ENCODE measurements at regions of chr1 and their contacts with region 1.

Region 1: DNA sequence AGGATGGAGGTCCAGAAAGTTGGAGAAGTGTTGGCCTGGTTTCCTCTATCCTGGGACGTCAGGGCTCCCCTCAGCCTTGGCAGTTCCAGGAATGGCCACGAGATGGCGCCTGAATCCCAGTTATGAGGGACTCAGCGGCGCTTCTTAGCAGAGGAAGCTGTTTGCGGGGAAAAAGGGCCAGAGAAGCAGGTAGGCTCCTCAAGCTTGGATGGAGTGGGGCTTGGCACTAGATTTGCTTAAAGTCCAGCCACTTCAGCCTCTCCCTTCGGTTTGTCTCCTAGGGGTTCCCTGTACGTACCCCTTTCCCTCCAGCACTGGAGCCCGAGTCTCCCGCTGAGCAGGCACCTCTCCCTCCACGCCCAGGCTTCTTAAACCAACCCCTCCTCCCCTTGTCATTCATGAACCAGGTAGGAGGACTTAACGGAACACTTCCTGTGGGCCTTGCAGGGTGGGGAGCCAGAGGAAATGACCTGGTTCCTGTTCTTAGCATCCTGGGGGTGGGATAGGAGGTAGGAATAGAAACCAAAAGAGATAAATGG is 32.0 kb upstream of the TENT5B start:
- DNase-seq: peak; percentile 85
- H3K4me3 Mint-ChIP-seq: no peak overlapping the region
- H3K27ac Mint-ChIP-seq: no peak overlapping the region
- H3K4me1 Mint-ChIP-seq: peaks cover 9% of the 10 kb centered on the region
- H3K27me3 Mint-ChIP-seq: no peaks in the 10 kb centered on the region
- CTCF ChIP-seq: peak; percentile 98

Region 2: DNA sequence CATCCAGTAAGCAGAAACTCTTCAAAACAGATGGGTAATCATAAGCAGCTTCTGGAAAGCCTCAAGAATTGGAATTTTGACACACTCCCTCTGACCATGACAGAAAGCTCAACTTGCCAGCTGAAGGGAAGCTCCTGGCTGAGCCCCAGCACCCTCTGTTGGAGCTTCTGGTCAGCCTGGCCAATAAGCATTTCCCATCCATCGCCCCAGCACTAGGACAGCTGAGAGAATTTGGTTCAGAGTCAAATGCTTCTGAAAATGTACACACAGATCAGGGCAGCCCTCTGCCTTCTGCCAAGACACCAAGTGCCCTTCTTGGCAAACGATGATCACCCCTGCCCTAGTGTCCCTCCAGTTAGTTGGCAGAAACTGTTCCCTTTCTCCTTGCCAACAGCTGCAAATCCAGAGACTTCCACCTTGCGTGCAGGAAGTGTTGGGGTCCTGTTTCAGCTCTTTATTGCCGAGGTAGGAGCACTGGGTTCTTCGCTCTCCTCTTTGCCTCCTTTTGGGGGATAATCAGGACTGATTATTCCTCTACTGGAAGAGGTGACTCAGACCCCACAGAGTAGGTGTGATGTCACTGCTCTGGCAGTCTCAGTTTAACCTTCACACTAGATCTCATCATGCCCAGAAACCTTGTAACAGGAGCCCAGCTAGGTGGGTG is 245.1 kb before region 1 on chr1:
- CTCF ChIA-PET with region 1: no interaction called
- POLR2A ChIA-PET with region 1: no interaction called
- intact Hi-C with region 1: no loop called
- DNase-seq: peak; percentile 70
- H3K4me3 Mint-ChIP-seq: no peak overlapping the region
- H3K27ac Mint-ChIP-seq: no peak overlapping the region
- H3K4me1 Mint-ChIP-seq: peaks cover 11% of the 10 kb centered on the region
- H3K27me3 Mint-ChIP-seq: no peaks in the 10 kb centered on the region
- CTCF ChIP-seq: no peak

Region 3: GRCh38 chr1:26965213-26965612 is 79.5 kb before region 1 on chr1:
- CTCF ChIA-PET with region 1: interaction called, 30 read pairs
- POLR2A ChIA-PET with region 1: no interaction called
- intact Hi-C with region 1: loop called (anchors 1 kb)
- DNase-seq: no peak
- H3K4me3 Mint-ChIP-seq: no peak overlapping the region
- H3K27ac Mint-ChIP-seq: no peak overlapping the region
- H3K4me1 Mint-ChIP-seq: peaks cover 37% of the 10 kb centered on the region
- H3K27me3 Mint-ChIP-seq: no peaks in the 10 kb centered on the region
- CTCF ChIP-seq: no peak

Region 4: DNA sequence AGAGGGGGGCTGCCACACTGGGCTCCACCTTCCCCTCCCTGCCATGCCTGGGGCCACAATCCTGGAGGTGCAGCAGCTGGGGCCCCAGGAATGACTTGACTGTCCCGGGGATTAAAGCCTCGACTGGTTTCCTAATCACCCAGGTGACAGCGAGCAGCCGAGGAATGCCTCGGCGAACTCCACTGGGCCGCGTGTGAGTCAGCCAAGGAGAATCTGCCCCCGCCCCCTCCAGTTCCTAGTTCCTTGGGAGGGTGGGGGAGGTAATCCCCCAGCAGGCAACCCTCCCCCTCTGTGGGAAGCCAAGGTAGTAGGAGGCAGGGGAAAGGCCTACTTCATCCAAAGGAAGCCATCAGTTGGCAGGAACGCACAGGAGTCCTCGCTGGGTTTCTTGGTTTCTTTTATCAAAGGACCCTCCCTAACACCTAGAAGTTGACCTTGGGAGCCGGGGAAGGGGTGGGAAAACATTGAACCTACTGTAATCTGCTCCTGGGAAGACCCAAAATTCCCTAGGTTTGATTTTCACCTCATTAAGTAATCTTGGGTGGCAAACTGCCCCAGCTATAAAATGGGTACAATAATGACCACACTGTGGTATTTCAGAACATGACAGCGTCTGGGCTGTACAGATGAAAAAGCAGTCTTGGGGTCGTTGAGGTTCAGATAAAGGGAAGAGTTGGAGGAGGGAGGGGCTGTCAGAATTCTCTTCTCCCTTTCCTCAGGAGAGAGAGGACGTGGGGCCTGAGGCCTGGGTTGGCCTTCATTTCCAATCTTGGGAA is 33.5 kb before region 1 on chr1:
- CTCF ChIA-PET with region 1: interaction called, 11 read pairs
- POLR2A ChIA-PET with region 1: interaction called, 4 read pairs
- intact Hi-C with region 1: no loop called
- DNase-seq: peak; percentile 95
- H3K4me3 Mint-ChIP-seq: peak overlapping the region; percentile 78
- H3K27ac Mint-ChIP-seq: peak overlapping the region; percentile 78
- H3K4me1 Mint-ChIP-seq: peaks cover 14% of the 10 kb centered on the region
- H3K27me3 Mint-ChIP-seq: no peaks in the 10 kb centered on the region
- CTCF ChIP-seq: no peak

Region 5: GRCh38 chr1:27057801-27058625 is 13.3 kb after region 1 on chr1:
- CTCF ChIA-PET with region 1: interaction called, 23 read pairs
- POLR2A ChIA-PET with region 1: interaction called, 3 read pairs
- intact Hi-C with region 1: no loop called
- DNase-seq: no peak
- H3K4me3 Mint-ChIP-seq: no peak overlapping the region
- H3K27ac Mint-ChIP-seq: no peak overlapping the region
- H3K4me1 Mint-ChIP-seq: no peaks in the 10 kb centered on the region
- H3K27me3 Mint-ChIP-seq: no peaks in the 10 kb centered on the region
- CTCF ChIP-seq: no peak

Region 6: DNA sequence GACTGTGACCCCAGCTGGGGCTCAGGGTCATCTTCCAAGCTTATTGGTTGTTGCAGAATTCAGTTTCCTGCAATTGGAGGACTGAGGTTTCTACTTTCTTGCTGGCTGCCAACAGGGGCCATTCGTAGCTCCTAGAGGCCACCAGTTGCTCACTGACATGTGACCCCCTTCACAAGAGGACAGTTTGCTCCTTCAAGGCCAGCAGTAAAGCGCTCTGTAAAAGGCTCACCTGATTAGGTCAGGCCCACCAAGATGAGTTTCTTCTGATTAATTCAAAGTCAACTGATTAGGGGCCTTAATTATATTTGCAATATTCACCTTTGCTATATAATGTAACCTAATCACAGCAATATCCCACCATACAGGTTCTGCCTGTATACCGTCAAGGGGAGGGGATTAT is 41.3 kb after region 1 on chr1:
- CTCF ChIA-PET with region 1: interaction called, 345 read pairs
- POLR2A ChIA-PET with region 1: interaction called, 3 read pairs
- intact Hi-C with region 1: no loop called
- DNase-seq: no peak
- H3K4me3 Mint-ChIP-seq: no peak overlapping the region
- H3K27ac Mint-ChIP-seq: no peak overlapping the region
- H3K4me1 Mint-ChIP-seq: no peaks in the 10 kb centered on the region
- H3K27me3 Mint-ChIP-seq: peaks cover 16% of the 10 kb centered on the region
- CTCF ChIP-seq: no peak

Region 7: DNA sequence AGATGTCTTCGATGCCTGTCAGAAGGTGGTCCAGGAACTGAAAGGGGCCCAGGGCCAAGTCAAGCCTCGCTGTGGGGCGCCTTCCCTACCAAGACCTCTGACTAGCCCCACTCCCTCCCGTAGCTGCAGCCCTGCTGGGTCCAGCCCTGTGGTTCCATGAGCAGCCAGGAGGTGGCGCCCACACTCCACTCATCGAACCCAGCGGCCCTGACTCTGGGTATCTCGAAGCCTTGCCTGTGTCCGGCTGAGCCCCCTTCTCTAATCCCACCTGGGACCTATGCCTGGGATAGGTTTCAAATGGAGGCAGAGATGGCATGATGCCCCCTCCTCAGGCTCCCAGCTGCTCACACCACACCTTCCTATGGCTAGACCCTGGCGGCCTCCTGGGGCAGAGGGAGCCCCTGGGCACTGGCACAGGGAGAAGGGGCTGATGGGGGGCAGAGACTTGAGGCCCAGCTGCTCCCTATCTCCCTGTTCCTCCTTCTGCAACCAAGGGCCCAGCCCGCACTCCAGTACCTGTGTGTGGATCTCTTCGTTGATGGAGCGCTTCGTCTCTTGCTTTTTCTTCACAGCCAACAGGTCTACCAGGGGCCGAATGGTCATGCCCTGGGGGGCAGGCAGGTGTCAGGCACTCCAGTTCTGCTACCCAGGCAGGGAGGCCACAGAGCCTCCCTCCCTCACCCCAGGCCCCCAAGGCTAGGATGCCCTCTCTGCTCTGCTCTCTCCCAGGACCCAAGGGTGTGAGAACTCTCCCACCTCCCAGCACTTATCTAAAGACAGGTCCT is 58.2 kb after region 1 on chr1:
- CTCF ChIA-PET with region 1: interaction called, 345 read pairs
- POLR2A ChIA-PET with region 1: interaction called, 26 read pairs
- intact Hi-C with region 1: no loop called
- DNase-seq: peak; percentile 72
- H3K4me3 Mint-ChIP-seq: no peak overlapping the region
- H3K27ac Mint-ChIP-seq: no peak overlapping the region
- H3K4me1 Mint-ChIP-seq: peaks cover 19% of the 10 kb centered on the region
- H3K27me3 Mint-ChIP-seq: no peaks in the 10 kb centered on the region
- CTCF ChIP-seq: peak; percentile 95

Region 8: GRCh38 chr1:27392096-27392777 is 347.6 kb after region 1 on chr1 and contains the start of gene GPR3:
- CTCF ChIA-PET with region 1: interaction called, 3 read pairs
- POLR2A ChIA-PET with region 1: interaction called, 3 read pairs
- intact Hi-C with region 1: loop called (anchors 1 kb)
- DNase-seq: peak; percentile 90
- H3K4me3 Mint-ChIP-seq: peak within 1 kb of the TSS; percentile 72
- H3K27ac Mint-ChIP-seq: peak within 1 kb of the TSS; percentile 53
- H3K4me1 Mint-ChIP-seq: peaks cover 18% of the 10 kb centered on the region
- H3K27me3 Mint-ChIP-seq: no peaks in the 10 kb centered on the region
- CTCF ChIP-seq: peak; percentile 53
- total RNA-seq, gene GPR3: 0.47 and 0.65 TPM in 2 replicates

Region 9: GRCh38 chr1:27725374-27726173 is 680.9 kb after region 1 on chr1 and contains the start of gene FAM76A:
- CTCF ChIA-PET with region 1: no interaction called
- POLR2A ChIA-PET with region 1: no interaction called
- intact Hi-C with region 1: no loop called
- DNase-seq: peak; percentile 98
- H3K4me3 Mint-ChIP-seq: peak within 1 kb of the TSS; percentile 88
- H3K27ac Mint-ChIP-seq: peak within 1 kb of the TSS; percentile 100
- H3K4me1 Mint-ChIP-seq: peaks cover 11% of the 10 kb centered on the region
- H3K27me3 Mint-ChIP-seq: peaks cover 3% of the 10 kb centered on the region
- CTCF ChIP-seq: peak; percentile 23
- total RNA-seq, gene FAM76A: 9.7 and 9.9 TPM in 2 replicates

Measured in MCF 10A (cell line).